Upper lobe of right lung (tissue), 1 donor: ENCODE measurements at regions of chr6 and their contacts with region 1.

Region 1: GRCh38 chr6:24699521-24700359 is 19.2 kb downstream of the C6orf62 start:
- DNase-seq: no peak
- ATAC-seq: no peak
- H3K4me3 ChIP-seq: no peak overlapping the region
- H3K27ac ChIP-seq: no peak overlapping the region
- H3K4me1 ChIP-seq: peaks cover 5% of the 10 kb centered on the region
- H3K27me3 ChIP-seq: no peaks in the 10 kb centered on the region
- CTCF ChIP-seq: no peak

Region 2: DNA sequence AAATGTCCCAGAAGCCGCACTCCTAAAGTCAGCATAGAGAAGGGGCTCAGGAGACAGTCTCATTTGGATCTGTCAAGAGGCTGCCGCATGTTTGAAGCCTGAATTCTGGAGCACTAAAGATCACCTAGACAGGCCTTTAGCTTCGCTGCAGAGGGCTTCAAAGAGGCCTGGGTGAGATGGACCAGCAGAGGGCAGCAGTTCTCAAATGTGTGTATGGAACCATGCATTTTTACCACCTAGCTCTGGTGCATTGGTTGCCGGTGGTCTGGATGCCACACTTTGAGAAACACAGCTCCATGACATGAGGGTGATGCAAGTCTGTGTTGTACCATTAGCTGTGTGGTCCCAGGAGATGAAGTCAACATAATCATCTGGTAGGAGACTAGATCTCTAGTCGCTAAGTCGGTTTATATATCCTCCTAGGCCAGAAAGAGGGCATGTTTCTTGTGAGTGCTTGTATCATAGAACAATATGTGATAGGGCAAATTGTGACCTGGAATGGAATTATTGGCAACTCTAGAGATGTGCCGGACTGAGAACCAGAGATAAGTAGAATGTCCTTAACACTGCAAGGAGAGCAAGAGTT is 118.6 kb before region 1 on chr6:
- intact Hi-C with region 1: loop called (anchors 5 kb)
- DNase-seq: peak; percentile 73
- ATAC-seq: peak; percentile 92
- H3K4me3 ChIP-seq: no peak overlapping the region
- H3K27ac ChIP-seq: no peak overlapping the region
- H3K4me1 ChIP-seq: peaks cover 13% of the 10 kb centered on the region
- H3K27me3 ChIP-seq: no peaks in the 10 kb centered on the region
- CTCF ChIP-seq: peak; percentile 85

Region 3: DNA sequence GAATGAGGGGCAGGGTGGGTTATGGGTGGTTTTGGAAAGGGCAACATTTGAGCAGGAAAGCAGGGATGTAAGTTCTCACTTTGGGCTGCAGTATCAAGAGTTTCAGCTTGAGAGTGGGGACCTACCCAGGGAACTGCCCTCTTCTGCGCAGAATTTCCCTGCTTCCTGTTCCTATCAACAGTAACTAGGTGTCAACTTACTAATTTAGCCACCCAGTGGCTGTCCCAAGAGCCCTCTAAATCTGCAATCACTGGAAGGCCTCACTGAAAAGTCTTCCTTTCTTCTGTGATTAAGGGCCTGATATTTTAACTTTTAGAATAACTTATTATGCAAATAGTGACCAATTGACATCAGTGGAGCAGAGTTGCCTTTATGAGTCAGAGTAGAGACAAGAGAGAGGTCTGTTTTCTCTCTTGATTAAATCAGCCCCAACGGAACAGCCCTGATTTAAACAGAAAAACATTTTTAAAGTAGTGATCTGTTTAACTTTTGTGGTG is 354.2 kb after region 1 on chr6:
- intact Hi-C with region 1: no loop called
- DNase-seq: no peak
- ATAC-seq: peak; percentile 63
- H3K4me3 ChIP-seq: no peak overlapping the region
- H3K27ac ChIP-seq: no peak overlapping the region
- H3K4me1 ChIP-seq: peaks cover 6% of the 10 kb centered on the region
- H3K27me3 ChIP-seq: no peaks in the 10 kb centered on the region
- CTCF ChIP-seq: no peak